ENCODE measurements at regions of chr17 and their contacts with region 1.

Region 1: DNA sequence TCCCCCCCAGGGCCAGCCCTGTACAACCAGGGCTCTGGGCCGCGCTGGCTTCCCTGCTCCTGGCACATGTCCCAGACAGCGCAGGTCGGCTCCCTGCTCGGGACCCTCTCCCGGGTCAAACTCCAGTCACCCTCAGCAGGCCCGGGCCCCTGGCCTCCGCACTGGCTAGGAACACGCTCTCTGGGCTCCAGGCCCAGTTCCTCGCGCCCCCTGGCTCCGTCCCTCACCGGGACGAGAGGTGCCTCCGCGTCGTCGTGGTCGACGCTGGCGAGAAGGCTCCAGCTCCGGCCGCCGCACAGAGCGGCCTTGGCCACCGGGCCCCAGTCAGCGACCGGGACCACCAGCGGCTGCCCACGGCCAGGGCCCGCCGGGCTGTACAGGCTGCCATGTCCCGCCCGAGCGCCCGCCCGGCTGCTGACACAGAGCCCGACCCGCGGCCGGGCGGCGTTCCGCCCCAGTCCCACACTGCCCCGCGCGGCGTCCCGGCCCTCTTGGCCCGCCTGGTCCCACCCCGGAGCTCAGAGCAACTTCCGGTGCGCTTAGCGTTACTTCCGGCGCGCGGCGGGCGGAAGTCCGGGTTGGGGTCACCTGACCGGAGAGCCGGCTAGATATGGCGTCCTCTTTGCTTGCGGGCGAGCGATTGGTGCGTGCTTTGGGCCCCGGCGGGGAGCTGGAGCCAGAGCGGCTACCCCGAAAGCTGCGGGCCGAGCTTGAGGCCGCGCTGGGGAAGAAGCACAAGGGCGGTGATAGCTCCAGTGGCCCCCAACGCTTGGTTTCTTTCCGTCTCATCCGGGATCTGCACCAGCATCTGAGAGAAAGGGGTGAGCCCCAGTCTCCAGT is at the start of gene POLDIP2:
- DNase-seq: peak; percentile 98
- H3K4me3 Mint-ChIP-seq: peak within 1 kb of the TSS; percentile 95
- H3K27ac Mint-ChIP-seq: peak within 1 kb of the TSS; percentile 79
- H3K4me1 Mint-ChIP-seq: peaks cover 28% of the 10 kb centered on the region
- H3K27me3 Mint-ChIP-seq: no peaks in the 10 kb centered on the region
- total RNA-seq, gene POLDIP2: 73.8 to 76.4 TPM

Region 2: DNA sequence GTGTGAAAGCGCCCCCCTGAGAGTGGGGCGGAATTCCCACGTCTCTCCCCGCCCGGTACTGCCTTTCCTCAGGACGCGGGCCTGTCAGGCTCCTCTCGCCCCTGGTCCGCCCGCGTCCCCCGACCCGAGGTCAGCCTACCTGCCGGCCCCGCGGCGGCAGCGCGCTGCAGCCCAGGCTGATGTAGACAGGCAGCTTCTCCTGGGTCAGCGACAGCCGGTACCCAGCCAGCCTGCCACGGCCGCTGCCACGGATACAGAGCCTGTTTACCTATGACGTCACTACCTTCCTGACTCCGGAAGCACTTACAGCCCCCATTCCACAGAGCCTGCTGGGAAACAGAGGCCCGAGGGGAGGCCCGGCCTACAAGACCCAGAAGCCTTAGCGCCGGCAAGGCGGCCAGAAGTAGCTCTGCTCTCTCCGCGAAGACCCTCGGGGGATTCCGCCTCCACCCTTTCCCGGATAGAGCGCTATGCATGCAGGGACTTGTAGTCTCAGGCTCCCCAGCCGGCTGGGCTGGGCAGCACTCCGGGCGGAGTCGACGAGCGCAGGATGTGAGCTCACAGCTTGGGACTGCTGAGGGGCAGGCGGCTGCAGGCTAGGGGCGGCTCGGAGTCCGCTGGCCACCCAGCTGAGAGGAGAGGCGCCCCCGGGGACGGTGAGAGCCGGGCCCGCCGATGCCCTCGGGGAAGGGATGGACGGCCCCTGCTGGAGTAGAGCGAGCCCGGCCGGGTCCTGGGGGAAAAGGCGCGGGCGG is 21.9 kb before region 1 on chr17 and contains the starts of genes IFT20 and TNFAIP1:
- CTCF ChIA-PET with region 1: interaction called, 9 read pairs
- POLR2A ChIA-PET with region 1: interaction called, 40 read pairs
- intact Hi-C with region 1: loop called (anchors 1 kb)
- DNase-seq: peak; percentile 99
- H3K4me3 Mint-ChIP-seq: peak within 1 kb of the TSS; percentile 94
- H3K27ac Mint-ChIP-seq: peak within 1 kb of the TSS; percentile 87
- H3K4me1 Mint-ChIP-seq: peaks cover 36% of the 10 kb centered on the region
- H3K27me3 Mint-ChIP-seq: no peaks in the 10 kb centered on the region
- total RNA-seq, gene IFT20: 20.3 to 20.6 TPM
- total RNA-seq, gene TNFAIP1: 24.4 to 27.3 TPM

Region 3: DNA sequence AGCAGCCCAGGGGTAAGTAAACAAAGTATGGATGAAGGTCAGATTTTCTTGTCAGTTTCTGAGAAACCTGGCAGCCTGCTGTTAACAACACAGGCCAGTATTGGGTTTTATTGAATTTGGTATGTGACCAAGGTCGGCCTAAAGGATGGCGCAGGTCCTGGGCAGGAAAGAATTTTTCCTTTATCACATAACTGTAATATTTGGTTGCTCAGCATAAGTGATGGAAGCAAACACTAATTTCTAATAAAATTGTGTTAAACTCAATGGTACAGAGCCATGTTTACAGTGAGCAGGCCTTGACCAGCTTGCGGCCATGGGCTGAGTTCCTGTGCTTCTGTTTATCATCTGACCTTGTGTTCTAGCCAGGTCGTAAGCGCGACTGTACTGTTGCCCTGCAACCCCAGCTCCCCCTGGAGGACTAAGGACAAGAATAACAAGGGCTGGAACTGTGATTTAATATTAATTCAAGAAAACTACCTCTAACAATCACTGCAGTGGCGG is 10.5 kb before region 1 on chr17:
- CTCF ChIA-PET with region 1: no interaction called
- POLR2A ChIA-PET with region 1: interaction called, 14 read pairs
- intact Hi-C with region 1: no loop called
- DNase-seq: no peak
- H3K4me3 Mint-ChIP-seq: no peak overlapping the region
- H3K27ac Mint-ChIP-seq: no peak overlapping the region
- H3K4me1 Mint-ChIP-seq: no peaks in the 10 kb centered on the region
- H3K27me3 Mint-ChIP-seq: no peaks in the 10 kb centered on the region

Region 4: GRCh38 chr17:28371245-28372202 is 14.2 kb after region 1 on chr17 and contains the start of gene SARM1:
- CTCF ChIA-PET with region 1: interaction called, 4 read pairs
- POLR2A ChIA-PET with region 1: interaction called, 12 read pairs
- intact Hi-C with region 1: loop called (anchors 1 kb)
- DNase-seq: peak; percentile 93
- H3K4me3 Mint-ChIP-seq: peak within 1 kb of the TSS; percentile 86
- H3K27ac Mint-ChIP-seq: peak within 1 kb of the TSS; percentile 79
- H3K4me1 Mint-ChIP-seq: peaks cover 16% of the 10 kb centered on the region
- H3K27me3 Mint-ChIP-seq: no peaks in the 10 kb centered on the region
- total RNA-seq, gene SARM1: 16.5 to 18.3 TPM

Measured in activated CD4-positive, alpha-beta memory T cell treated with anti-CD3 and anti-CD28 coated beads for 36 hours (primary cell).